Sigmoid colon (tissue), 7 donors: ENCODE measurements at regions of chr1 and their contacts with region 1.

Region 1: GRCh38 chr1:67500413-67500959 is 70.3 kb upstream of the SERBP1 start:
- DNase-seq: peak; percentile 88
- H3K4me3 ChIP-seq: no peak overlapping the region
- H3K27ac ChIP-seq: no peak overlapping the region
- H3K4me1 ChIP-seq: no peaks in the 10 kb centered on the region
- H3K27me3 ChIP-seq: no peaks in the 10 kb centered on the region
- CTCF ChIP-seq: peak; percentile 85 to 96 (median 90)
- EP300 ChIP-seq: no peak
- POLR2A ChIP-seq: no peak

Region 2: DNA sequence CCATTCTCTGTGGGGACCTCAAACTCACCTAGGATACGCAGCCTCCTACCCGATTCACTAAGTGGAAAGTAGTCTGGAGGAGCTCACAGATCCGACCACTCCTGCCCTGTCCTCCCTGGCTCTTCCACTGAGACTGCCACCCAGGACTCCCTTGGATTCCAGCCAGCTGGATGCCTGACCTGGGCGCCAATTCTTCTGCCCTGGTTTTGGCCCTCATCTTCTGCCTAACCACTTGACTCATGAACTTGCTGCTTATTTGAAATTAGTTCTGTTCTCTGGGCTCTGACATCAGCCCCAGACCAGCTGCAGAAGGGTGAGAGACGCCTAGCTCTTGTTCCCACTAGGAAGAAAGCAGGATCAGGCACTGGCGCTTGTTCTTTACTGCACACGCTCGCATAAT is 495.4 kb before region 1 on chr1:
- intact Hi-C with region 1: loop called (anchors 10 kb)
- DNase-seq: no peak
- H3K4me3 ChIP-seq: no peak overlapping the region
- H3K27ac ChIP-seq: peak overlapping the region in 1 of 4 donors; percentile 6
- H3K4me1 ChIP-seq: peaks cover 0 to 32% (median 16%) of the 10 kb centered on the region in 4 donors
- H3K27me3 ChIP-seq: no peaks in the 10 kb centered on the region
- CTCF ChIP-seq: no peak
- EP300 ChIP-seq: no peak
- POLR2A ChIP-seq: no peak

Region 3: GRCh38 chr1:67214420-67215174 is 285.9 kb before region 1 on chr1:
- intact Hi-C with region 1: loop called (anchors 2 kb)
- DNase-seq: no peak
- H3K4me3 ChIP-seq: no peak overlapping the region
- H3K27ac ChIP-seq: no peak overlapping the region
- H3K4me1 ChIP-seq: no peaks in the 10 kb centered on the region
- H3K27me3 ChIP-seq: no peaks in the 10 kb centered on the region
- CTCF ChIP-seq: peak in 1 of 4 experiments; percentile 8
- EP300 ChIP-seq: no peak
- POLR2A ChIP-seq: no peak

Region 4: GRCh38 chr1:67347688-67348472 is 152.6 kb before region 1 on chr1:
- intact Hi-C with region 1: loop called (anchors 1 kb)
- DNase-seq: no peak
- H3K4me3 ChIP-seq: no peak overlapping the region
- H3K27ac ChIP-seq: no peak overlapping the region
- H3K4me1 ChIP-seq: no peaks in the 10 kb centered on the region
- H3K27me3 ChIP-seq: no peaks in the 10 kb centered on the region
- CTCF ChIP-seq: peak in 3 of 4 experiments; percentile 30 to 61 (median 53)
- EP300 ChIP-seq: no peak
- POLR2A ChIP-seq: no peak

Region 5: GRCh38 chr1:67393737-67394136 is 106.7 kb before region 1 on chr1:
- intact Hi-C with region 1: no loop called
- DNase-seq: no peak
- H3K4me3 ChIP-seq: no peak overlapping the region
- H3K27ac ChIP-seq: no peak overlapping the region
- H3K4me1 ChIP-seq: no peaks in the 10 kb centered on the region
- H3K27me3 ChIP-seq: no peaks in the 10 kb centered on the region
- CTCF ChIP-seq: no peak
- EP300 ChIP-seq: no peak
- POLR2A ChIP-seq: no peak